B cell (primary cell): ENCODE measurements at regions of chr3 and their contacts with region 1.

Region 1: GRCh38 chr3:105518806-105519418 is 152.2 kb downstream of the ALCAM start:
- DNase-seq: peak; percentile 77
- ATAC-seq: peak; percentile 57
- H3K4me3 ChIP-seq: no peak overlapping the region
- H3K4me3 Mint-ChIP-seq: no peak overlapping the region
- H3K27ac ChIP-seq: no peak overlapping the region
- H3K27ac Mint-ChIP-seq: no peak overlapping the region
- H3K4me1 ChIP-seq: no peaks in the 10 kb centered on the region
- H3K4me1 Mint-ChIP-seq: peaks cover 4% of the 10 kb centered on the region
- H3K27me3 ChIP-seq: no peaks in the 10 kb centered on the region
- H3K27me3 Mint-ChIP-seq: no peaks in the 10 kb centered on the region
- CTCF ChIP-seq: peak; percentile 89

Region 2: DNA sequence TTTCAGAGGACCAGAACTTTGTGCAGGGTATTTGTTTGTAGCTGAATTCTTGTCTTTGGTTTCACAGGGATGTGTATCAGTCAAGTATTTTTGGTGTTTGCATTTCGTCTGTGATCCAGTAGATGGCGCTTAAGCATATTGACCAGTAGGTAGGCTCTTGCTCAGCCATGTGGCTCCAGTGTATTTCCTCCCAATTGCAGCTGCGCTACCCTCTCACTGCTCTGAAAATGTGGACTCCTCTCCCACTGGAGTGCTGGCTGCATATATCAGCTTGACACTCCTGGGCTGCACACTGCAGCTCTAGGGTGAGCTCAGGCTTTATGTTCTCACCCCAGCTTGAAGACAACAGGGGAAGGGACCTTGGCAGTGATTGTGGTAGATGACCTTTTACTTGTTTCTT is 1416.5 kb before region 1 on chr3:
- CTCF ChIA-PET with region 1: interaction called, 15 read pairs
- POLR2A ChIA-PET with region 1: no interaction called
- intact Hi-C with region 1: no loop called
- DNase-seq: peak; percentile 59
- ATAC-seq: peak; percentile 76
- H3K4me3 ChIP-seq: no peak overlapping the region
- H3K4me3 Mint-ChIP-seq: no peak overlapping the region
- H3K27ac ChIP-seq: no peak overlapping the region
- H3K27ac Mint-ChIP-seq: no peak overlapping the region
- H3K4me1 ChIP-seq: peaks cover 3 to 4% of the 10 kb centered on the region in 2 donors
- H3K4me1 Mint-ChIP-seq: peaks cover 5% of the 10 kb centered on the region
- H3K27me3 ChIP-seq: peaks cover 0 to 4% (median 0%) of the 10 kb centered on the region in 4 experiments
- H3K27me3 Mint-ChIP-seq: peaks cover 3% of the 10 kb centered on the region
- CTCF ChIP-seq: peak; percentile 79

Region 3: GRCh38 chr3:104273046-104273649 is 1245.8 kb before region 1 on chr3:
- CTCF ChIA-PET with region 1: interaction called, 30 read pairs
- POLR2A ChIA-PET with region 1: no interaction called
- intact Hi-C with region 1: loop called (anchors 1 kb)
- DNase-seq: peak; percentile 50
- ATAC-seq: no peak
- H3K4me3 ChIP-seq: no peak overlapping the region
- H3K4me3 Mint-ChIP-seq: no peak overlapping the region
- H3K27ac ChIP-seq: no peak overlapping the region
- H3K27ac Mint-ChIP-seq: no peak overlapping the region
- H3K4me1 ChIP-seq: no peaks in the 10 kb centered on the region
- H3K4me1 Mint-ChIP-seq: no peaks in the 10 kb centered on the region
- H3K27me3 ChIP-seq: no peaks in the 10 kb centered on the region
- H3K27me3 Mint-ChIP-seq: no peaks in the 10 kb centered on the region
- CTCF ChIP-seq: peak; percentile 81

Region 4: GRCh38 chr3:104596551-104596950 is 922.4 kb before region 1 on chr3:
- CTCF ChIA-PET with region 1: interaction called, 15 read pairs
- POLR2A ChIA-PET with region 1: no interaction called
- intact Hi-C with region 1: loop called (anchors 1 kb)
- DNase-seq: peak; percentile 59
- ATAC-seq: peak; percentile 63
- H3K4me3 ChIP-seq: no peak overlapping the region
- H3K4me3 Mint-ChIP-seq: no peak overlapping the region
- H3K27ac ChIP-seq: no peak overlapping the region
- H3K27ac Mint-ChIP-seq: no peak overlapping the region
- H3K4me1 ChIP-seq: no peaks in the 10 kb centered on the region
- H3K4me1 Mint-ChIP-seq: peaks cover 3% of the 10 kb centered on the region
- H3K27me3 ChIP-seq: no peaks in the 10 kb centered on the region
- H3K27me3 Mint-ChIP-seq: no peaks in the 10 kb centered on the region
- CTCF ChIP-seq: peak; percentile 69

Region 5: DNA sequence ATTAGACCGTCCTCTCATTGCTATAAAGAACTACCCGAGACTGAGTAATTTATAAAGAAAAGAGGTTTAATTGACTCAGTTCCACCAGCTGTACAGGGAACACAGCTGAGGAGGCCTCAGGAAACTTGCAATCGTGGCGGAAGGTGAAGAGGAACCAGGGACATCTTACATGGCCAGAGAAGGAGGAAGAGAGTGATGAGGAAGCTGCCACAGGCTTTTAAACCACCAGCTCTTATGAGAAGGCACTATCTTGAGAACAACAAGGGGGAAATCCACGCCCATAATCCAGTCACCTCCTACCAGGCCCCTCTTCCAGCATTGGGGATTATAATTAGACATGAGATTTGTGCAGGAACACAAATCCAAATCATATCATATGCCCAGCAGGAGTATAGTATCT is 13.7 kb before region 1 on chr3:
- CTCF ChIA-PET with region 1: interaction called, 10 read pairs
- POLR2A ChIA-PET with region 1: no interaction called
- intact Hi-C with region 1: no loop called
- DNase-seq: no peak
- ATAC-seq: no peak
- H3K4me3 ChIP-seq: no peak overlapping the region
- H3K4me3 Mint-ChIP-seq: no peak overlapping the region
- H3K27ac ChIP-seq: no peak overlapping the region
- H3K27ac Mint-ChIP-seq: no peak overlapping the region
- H3K4me1 ChIP-seq: no peaks in the 10 kb centered on the region
- H3K4me1 Mint-ChIP-seq: peaks cover 6% of the 10 kb centered on the region
- H3K27me3 ChIP-seq: no peaks in the 10 kb centered on the region
- H3K27me3 Mint-ChIP-seq: no peaks in the 10 kb centered on the region
- CTCF ChIP-seq: no peak

Region 6: DNA sequence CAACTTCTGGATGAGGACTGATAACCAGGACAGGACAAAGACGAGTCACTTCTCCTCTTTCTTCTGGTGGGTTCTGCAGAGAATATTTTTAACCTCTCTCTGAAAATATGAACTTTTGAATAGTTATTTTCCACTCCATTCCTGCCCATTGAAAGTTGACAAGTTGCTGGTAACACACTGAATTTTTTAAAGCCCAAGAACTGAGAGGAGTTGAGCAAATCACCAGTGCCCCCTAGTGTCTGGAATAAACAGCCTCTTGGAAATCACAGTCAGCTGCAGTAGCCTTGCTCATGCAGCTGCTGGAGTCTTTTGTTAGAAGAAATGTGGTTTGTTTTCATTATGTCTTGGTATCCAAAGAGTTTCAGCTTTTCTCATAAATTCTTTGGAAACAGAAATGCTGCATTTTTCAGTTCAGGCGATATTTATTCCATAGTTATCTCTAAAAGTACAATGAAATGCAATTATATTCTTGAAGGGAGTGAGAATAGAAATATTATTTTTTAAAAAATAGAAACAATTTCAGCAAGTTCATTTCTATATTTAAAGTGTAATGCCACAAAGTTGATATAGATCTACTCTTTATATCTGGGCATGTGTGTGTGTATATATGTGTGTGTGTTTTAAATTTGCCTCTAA is 1090.9 kb after region 1 on chr3:
- CTCF ChIA-PET with region 1: interaction called, 10 read pairs
- POLR2A ChIA-PET with region 1: no interaction called
- intact Hi-C with region 1: loop called (anchors 2 kb)
- DNase-seq: peak; percentile 76
- ATAC-seq: peak; percentile 65
- H3K4me3 ChIP-seq: no peak overlapping the region
- H3K4me3 Mint-ChIP-seq: no peak overlapping the region
- H3K27ac ChIP-seq: no peak overlapping the region
- H3K27ac Mint-ChIP-seq: no peak overlapping the region
- H3K4me1 ChIP-seq: no peaks in the 10 kb centered on the region
- H3K4me1 Mint-ChIP-seq: peaks cover 2% of the 10 kb centered on the region
- H3K27me3 ChIP-seq: no peaks in the 10 kb centered on the region
- H3K27me3 Mint-ChIP-seq: no peaks in the 10 kb centered on the region
- CTCF ChIP-seq: peak; percentile 93